Psoas muscle (tissue), 8 donors: ENCODE measurements at regions of chr1 and their contacts with region 1.

Region 1: DNA sequence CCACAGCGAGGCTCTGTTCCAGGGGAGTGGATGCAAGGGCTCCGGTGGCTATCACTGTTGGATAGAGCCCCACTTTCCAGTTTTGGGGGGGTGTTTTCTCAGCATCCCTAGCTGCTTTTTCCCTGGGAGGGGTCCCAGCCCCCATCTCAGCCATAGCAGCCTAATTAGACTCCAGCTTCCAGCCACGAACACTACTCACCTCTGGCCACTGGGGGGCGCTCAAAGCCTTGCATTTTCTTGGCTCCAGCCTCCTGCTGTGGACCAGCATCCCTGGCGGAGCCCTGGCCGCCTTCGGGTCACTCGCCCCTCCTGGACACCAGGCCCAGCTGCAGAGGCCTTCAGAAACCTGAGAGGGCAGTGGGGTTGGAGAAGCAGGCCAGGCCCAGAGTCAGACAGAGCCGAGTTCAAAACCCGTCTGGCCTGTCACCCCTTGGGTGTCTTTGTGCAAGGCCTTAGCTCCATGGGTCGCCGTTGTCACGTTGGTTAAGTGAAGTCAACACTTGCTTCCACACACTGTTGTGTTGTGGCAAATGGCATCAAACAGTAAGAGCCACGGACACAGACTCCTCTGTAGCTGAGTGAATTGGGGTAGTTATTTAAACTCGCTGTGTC is 93.5 kb upstream of the ACTL8 start:
- DNase-seq: peak; percentile 61 to 81
- ATAC-seq: peak; percentile 64 to 69 (median 66)
- H3K4me3 ChIP-seq: no peak overlapping the region
- H3K27ac ChIP-seq: no peak overlapping the region
- H3K4me1 ChIP-seq: no peaks in the 10 kb centered on the region
- H3K27me3 ChIP-seq: no peaks in the 10 kb centered on the region
- CTCF ChIP-seq: peak; percentile 76

Region 2: DNA sequence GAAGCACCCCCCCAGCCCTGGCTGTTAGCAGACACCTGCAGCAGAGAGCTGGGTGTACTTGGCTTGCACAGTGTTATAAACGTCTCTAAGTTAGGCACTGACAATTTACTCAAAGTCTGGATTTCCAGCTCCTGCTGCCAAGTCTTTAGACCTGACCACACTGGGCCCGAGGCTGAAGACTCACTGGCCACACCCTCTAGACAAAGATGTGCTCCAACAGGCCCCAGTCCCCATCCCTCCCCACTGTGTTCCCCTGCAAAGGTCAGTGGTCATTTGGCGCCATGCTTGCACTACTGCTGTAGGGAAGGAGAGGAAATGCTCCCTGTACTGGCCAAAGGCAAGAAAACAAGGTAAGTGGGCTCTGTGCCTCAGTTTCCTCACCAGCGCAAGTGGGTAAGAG is 258.5 kb before region 1 on chr1:
- intact Hi-C with region 1: no loop called
- DNase-seq: no peak
- ATAC-seq: no peak
- H3K4me3 ChIP-seq: no peak overlapping the region
- H3K27ac ChIP-seq: no peak overlapping the region
- H3K4me1 ChIP-seq: no peaks in the 10 kb centered on the region
- H3K27me3 ChIP-seq: no peaks in the 10 kb centered on the region
- CTCF ChIP-seq: no peak

Region 3: DNA sequence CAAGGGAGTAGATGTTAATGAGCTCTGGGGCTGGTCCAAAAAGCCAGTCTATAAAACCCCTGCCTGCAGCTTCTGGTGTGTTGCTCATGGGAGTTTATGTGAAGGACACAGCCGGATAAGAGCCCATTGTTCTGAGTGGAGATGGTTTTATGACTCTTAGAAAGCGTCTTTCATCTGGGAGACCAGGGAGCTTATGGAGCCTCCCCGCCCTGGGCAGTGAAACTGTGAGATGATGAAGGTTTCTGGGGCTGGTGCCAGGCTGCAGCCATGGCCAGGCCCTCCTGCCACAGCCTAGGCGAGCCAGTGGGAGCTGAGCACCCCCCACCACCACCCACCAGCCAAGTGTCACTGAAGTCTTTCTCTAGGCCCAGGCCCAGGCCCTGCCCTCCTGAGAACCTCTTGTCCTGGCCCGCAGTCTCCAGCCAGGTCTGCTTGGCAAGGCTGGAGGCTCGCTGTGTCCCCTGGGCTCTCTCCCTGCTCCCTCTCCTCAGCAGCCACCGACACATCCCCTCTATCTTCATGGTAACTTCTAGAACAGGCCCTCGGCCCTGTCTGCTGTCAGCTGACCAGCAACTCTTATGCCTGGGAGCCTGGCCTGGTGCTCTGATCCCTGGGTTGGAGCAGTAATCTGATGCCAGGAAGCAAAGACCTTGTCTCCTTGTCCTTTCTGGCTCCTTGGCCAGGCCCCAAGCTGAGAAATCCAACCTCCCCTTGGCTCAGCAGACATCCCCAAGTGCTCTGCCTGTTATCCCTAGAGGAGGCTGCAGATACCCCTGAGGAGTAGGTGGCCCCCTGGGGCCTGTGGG is 129.8 kb before region 1 on chr1:
- intact Hi-C with region 1: no loop called
- DNase-seq: peak; percentile 73 to 87
- ATAC-seq: peak; percentile 89 to 93 (median 92)
- H3K4me3 ChIP-seq: no peak overlapping the region
- H3K27ac ChIP-seq: peak overlapping the region; percentile 73
- H3K4me1 ChIP-seq: peaks cover 11% of the 10 kb centered on the region
- H3K27me3 ChIP-seq: no peaks in the 10 kb centered on the region
- CTCF ChIP-seq: no peak

Region 4: DNA sequence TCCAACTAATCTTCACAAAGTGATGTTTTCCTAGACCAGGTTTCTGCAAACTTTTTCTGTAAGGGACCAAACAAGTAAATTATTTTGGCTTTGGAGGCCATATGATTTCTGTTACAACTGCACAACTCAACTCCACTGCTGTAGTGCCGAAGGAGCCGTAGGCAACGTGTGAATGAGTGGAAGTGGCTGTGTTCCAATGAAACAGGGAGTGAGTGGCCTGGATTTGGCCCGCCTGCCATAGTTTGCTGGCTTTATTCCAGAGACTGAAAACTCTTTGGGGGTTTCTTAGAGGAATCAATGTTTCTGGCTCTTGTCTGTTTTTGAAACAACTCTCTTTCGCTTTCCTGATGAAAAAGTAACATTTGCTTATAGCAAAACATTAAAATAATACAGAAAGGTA is 80.9 kb after region 1 on chr1:
- intact Hi-C with region 1: loop called in 1 of 2 experiments (anchors 5 kb)
- DNase-seq: no peak
- ATAC-seq: no peak
- H3K4me3 ChIP-seq: no peak overlapping the region
- H3K27ac ChIP-seq: no peak overlapping the region
- H3K4me1 ChIP-seq: no peaks in the 10 kb centered on the region
- H3K27me3 ChIP-seq: peaks cover 0 to 20% (median 8%) of the 10 kb centered on the region in 3 donors
- CTCF ChIP-seq: no peak

Region 5: DNA sequence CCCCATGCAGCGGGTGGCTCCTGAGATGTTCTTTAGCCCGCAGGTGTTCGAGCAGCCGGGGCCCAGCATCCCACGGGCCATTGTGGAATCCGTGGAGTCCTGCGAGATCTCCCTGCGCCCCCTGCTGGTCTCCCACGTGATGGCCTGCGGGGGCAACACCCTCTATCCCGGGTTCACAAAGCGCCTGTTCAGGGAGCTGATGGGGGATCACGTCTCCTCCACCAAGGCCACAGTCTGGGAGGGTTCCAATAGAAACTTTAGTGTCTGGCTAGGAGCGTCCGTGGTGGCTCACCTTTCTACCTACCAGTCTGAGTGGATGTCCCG is 164.5 kb after region 1 on chr1:
- intact Hi-C with region 1: loop called in 1 of 2 experiments (anchors 5 kb)
- DNase-seq: peak; percentile 59 to 73
- ATAC-seq: peak in 1 of 4 donors; percentile 35
- H3K4me3 ChIP-seq: no peak overlapping the region
- H3K27ac ChIP-seq: no peak overlapping the region
- H3K4me1 ChIP-seq: no peaks in the 10 kb centered on the region
- H3K27me3 ChIP-seq: peaks cover 0 to 49% (median 5%) of the 10 kb centered on the region in 3 donors
- CTCF ChIP-seq: peak; percentile 43

Region 6: GRCh38 chr1:18100491-18101063 is 438.9 kb after region 1 on chr1:
- intact Hi-C with region 1: loop called in 1 of 2 experiments (anchors 5 kb)
- DNase-seq: peak; percentile 58 to 72
- ATAC-seq: peak in 3 of 4 donors; percentile 44 to 67 (median 53)
- H3K4me3 ChIP-seq: no peak overlapping the region
- H3K27ac ChIP-seq: no peak overlapping the region
- H3K4me1 ChIP-seq: no peaks in the 10 kb centered on the region
- H3K27me3 ChIP-seq: peaks cover 0 to 28% (median 8%) of the 10 kb centered on the region in 3 donors
- CTCF ChIP-seq: peak; percentile 57

Region 7: DNA sequence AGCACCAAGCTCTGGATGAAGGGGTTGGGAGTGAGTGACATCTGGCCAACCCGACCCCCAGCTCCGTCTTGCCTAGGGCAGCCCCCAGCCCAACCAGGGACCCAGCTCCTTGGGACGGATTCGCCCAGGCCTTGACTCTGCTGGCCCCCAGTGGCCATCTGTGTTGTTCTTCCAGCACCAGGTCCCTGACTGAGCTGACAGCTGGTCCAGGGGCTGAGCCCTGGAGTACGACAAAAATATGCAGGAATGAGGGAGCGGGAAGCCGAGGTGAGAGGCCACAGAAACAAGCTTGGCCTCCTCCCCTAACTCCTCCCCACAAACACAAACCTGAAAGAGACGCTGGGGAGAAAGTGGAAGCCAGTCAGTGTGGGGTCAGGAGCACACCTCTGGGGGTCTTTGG is 914.0 kb after region 1 on chr1:
- intact Hi-C with region 1: loop called in 1 of 2 experiments (anchors 10 kb)
- DNase-seq: no peak
- ATAC-seq: peak in 1 of 4 donors; percentile 32
- H3K4me3 ChIP-seq: no peak overlapping the region
- H3K27ac ChIP-seq: no peak overlapping the region
- H3K4me1 ChIP-seq: no peaks in the 10 kb centered on the region
- H3K27me3 ChIP-seq: peaks cover 0 to 16% (median 2%) of the 10 kb centered on the region in 3 donors
- CTCF ChIP-seq: peak; percentile 55